ENCODE measurements at regions of chr5 and their contacts with region 1.

Region 1: DNA sequence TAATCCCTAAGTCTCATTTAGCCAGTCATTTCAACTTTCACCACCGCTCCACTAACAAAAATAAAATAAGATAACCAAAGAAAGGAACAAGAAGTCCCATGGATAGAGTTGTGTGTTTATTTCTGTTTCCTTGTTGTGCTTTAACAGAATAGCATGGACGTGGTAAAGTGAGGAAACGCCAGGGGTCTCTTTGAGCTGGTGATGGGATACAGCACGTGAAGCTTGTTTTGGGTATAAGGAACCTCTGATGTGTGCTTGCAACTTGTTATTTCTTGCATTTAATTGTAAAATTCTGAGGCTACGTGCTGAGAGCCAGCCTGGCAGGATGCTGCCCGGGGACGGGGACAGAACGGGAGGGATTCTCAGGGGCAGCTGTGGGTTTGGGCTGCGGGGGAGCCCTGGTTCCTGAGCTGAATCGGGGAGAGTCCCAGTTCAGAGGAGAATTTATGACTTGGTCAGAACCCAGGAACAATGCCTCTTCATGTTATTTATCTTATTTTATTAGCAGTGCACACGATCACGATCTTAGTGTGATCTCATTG is 63.4 kb downstream of the ANKRD33B start:
- DNase-seq: no peak

Region 2: DNA sequence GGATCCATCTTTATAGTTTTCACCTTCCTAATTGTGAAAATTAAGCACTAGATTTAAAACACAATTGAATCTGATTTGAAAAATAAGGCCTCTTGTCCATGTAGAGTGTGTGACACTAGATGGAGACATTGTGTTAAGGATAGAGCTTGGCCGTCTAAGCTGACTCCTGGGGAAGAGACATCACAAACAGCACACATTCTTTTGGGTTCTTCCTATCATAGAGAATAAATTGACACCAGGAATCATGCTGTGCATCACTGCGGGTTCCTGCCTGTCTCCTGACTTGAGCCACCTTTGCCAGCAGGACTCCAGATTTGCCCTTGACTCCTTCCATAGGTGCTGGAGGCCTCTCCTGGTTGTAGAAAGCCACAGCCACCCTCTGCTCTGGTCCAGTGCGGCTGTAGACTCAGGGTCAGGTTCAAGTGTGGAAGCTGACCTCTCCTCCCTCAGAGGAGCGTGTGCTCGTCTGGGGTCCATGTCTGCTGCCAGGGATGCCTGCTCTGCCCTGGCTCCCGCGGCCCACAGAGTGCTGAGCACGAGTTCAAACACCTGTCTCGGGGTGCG is 174.4 kb before region 1 on chr5:
- intact Hi-C with region 1: loop called (anchors 2 kb)
- DNase-seq: no peak

Measured in posterior vena cava (tissue), 2 donors.